ENCODE measurements at regions of chr1 and their contacts with region 1.

Region 1: DNA sequence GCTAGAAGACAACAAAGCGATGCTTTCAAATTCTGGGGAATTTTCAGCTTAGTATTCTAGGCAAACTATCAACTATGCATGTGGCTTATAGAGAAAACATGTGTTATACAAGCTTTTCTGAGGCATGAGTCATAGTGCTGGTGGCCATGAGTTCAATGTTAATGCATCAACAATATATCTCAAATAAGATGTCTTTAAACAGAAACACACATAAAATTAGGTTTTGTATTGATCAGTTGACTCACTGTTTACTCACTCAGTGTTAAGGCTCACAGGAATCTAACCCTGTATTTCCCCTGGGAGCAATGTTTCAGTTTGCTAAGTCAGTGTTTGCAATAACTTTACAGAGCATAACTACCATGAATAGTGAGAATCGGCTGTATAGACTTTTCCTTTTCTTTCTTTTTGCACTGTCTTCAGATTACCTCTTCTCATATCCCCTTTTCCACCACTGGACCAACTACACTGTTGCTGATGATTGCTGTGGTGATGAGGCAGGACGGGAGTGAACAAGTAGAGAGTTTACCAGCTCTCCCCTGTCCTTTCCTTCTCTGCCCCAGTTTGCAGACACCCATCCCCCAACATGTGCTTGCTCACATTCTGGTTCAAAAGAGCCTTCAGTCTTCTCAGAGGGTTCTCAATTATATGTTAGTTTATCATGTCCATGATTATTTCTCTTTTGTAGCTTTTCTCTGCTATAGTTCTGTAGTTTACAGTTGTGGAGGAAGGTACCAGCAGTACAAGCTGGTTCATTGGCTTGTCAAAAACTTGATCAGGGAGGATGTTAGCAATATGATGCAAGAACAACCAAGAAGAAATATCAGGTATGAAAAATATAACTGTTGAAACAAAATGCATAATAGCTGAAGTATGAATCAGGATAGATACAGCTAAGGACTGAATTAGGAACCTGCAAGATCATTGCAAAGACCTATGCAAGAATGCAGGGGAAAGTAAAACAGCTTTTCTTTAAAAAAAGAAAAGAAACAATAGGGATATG is 23.9 kb downstream of the CD2 start:
- DNase-seq: no peak
- H3K4me3 Mint-ChIP-seq: peak overlapping the region; percentile 41
- H3K27ac Mint-ChIP-seq: peak overlapping the region; percentile 89
- H3K4me1 Mint-ChIP-seq: peaks cover 46% of the 10 kb centered on the region
- H3K27me3 Mint-ChIP-seq: no peaks in the 10 kb centered on the region

Region 2: DNA sequence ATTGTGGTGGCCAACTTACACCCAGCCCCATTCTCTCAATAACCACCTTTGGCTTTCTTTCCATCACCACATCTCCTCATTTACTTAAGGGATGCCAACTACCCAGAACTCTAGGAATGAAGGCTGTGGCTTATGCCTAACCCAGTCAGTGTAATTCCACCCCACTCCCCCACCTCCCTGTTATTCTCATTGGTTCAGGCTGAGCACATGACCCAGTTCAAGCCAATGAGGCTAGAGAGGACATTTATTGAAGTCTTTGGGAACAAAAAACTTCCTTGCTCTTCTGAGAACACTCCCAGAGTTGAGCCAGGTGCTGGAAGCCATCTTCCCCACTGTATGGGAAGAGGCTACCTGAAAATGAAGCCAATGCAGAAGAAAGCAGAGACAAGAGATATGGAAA is 46.7 kb before region 1 on chr1:
- CTCF ChIA-PET with region 1: no interaction called
- POLR2A ChIA-PET with region 1: no interaction called
- intact Hi-C with region 1: no loop called
- DNase-seq: no peak
- H3K4me3 Mint-ChIP-seq: no peak overlapping the region
- H3K27ac Mint-ChIP-seq: no peak overlapping the region
- H3K4me1 Mint-ChIP-seq: peaks cover 40% of the 10 kb centered on the region
- H3K27me3 Mint-ChIP-seq: no peaks in the 10 kb centered on the region

Region 3: DNA sequence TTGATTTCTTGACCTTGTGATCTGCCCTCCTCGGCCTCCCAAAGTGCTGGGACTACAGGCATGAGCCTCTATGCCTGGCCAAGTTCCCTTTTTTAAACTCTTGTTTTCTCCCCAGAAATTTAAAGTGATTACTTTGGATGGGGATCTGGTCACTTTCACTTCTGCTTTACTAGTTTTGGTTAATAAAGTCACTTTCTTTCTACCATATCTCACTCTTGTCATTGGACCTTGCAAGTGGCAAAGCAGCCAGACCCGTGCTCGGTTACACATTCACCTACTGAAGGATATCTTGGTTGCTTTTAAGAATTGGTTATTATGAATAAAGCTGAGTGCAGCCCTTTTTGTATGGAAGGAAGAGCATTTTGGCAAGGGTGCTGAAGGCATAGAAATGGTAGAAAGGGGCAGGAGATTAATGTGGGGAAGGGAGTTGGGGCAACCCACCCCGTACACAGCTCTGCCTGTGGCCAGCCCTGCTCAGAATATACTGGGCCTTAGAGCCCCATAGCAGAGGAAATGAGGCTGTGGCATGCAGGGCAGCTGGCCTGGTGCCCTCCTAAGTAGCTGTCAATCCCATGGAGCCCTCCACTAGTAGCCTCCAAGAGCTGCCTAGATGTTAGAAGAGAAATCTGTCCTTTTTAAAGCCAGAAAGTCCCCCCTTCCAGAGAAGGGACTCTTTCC is 16.8 kb after region 1 on chr1:
- CTCF ChIA-PET with region 1: interaction called, 4 read pairs
- POLR2A ChIA-PET with region 1: interaction called, 1,099 read pairs
- intact Hi-C with region 1: no loop called
- DNase-seq: no peak
- H3K4me3 Mint-ChIP-seq: no peak overlapping the region
- H3K27ac Mint-ChIP-seq: peak overlapping the region; percentile 40
- H3K4me1 Mint-ChIP-seq: peaks cover 66% of the 10 kb centered on the region
- H3K27me3 Mint-ChIP-seq: no peaks in the 10 kb centered on the region